ENCODE measurements at regions of chr12 and their contacts with region 1.

Region 1: DNA sequence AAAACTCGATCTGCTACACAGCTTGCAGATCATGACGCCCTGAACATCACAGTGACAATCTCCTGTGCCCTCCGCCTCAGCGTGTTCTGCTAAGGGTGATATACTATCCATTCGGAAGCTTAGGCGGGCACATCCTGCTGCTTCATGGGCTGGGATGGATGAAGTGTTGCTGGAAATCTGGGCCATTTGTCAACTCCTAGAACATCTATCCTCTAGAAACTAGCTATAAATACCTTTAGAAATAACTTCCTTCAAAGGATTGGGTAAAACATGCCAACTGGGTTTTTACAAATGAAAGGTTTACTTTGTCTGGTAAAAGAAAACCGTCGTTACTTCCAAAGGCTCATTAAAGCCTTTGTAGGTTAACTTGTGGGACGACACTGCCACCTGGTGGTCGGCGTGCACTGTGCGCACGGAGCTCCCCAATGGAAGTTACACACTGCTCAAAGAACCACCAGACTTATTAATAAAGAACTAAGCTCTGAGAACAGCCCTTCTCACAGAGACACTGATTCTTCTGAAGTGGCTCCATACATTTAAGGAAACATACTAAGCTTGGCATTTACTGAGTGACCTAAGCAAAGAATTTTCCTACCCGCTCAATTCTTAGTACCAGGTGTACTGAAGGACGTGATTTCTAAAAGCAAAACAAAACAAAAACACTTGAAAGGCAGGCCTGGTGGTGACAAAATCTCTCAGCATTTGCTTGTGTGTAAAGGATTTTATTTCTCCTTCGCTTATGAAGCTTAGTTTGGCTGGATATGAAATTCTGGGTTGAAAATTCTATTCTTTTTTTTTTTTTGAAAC is 21.6 kb upstream of the CACNA2D4 start:
- DNase-seq: peak; percentile 82 to 98
- H3K4me3 ChIP-seq: no peak overlapping the region
- CTCF ChIP-seq: peak in 1 of 3 donors; percentile 95
- POLR2A ChIP-seq: no peak

Region 2: GRCh38 chr12:1634590-1635191 is 305.3 kb before region 1 on chr12:
- intact Hi-C with region 1: loop called (anchors 5 kb)
- DNase-seq: peak; percentile 57 to 92
- H3K4me3 ChIP-seq: no peak overlapping the region
- CTCF ChIP-seq: no peak
- POLR2A ChIP-seq: no peak

Region 3: DNA sequence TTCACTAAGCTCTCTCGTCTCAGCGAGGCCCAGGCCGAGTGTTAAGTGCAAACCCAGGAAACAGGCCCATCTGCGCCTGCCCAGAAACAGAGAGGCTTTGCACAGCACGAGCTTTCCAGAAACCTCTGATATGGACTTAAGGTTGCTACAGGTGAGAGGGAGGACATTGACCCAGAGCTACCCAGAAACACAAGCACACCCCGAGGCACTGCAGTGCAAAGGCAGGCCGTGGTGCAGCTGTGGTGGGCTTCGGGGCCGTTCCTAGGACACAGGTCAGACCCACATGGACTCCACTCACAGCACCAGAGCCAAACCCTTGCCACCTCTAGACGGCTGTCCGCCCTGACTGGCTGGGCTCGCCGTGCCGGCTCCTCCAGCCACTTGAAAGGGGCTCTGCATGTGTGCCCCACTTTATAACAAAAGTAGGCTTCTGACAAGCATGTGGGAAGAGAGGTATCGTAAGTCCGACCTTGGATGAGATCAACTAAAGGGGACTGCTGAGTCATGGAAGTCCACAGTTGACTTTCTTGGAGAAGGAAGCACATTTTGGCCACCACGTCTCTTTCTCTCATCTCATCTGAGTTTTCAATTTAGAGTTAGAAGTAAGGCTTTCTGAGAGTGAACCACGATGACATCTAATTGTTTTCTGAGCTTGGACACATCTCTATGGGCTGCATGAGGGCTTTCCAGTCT is 59.7 kb before region 1 on chr12:
- intact Hi-C with region 1: no loop called
- DNase-seq: peak in 1 of 2 donors; percentile 67
- H3K4me3 ChIP-seq: no peak overlapping the region
- CTCF ChIP-seq: no peak
- POLR2A ChIP-seq: no peak

Region 4: GRCh38 chr12:1907652-1908611 is 32.1 kb before region 1 on chr12:
- intact Hi-C with region 1: no loop called
- DNase-seq: peak in 1 of 2 donors; percentile 69
- H3K4me3 ChIP-seq: no peak overlapping the region
- CTCF ChIP-seq: no peak
- POLR2A ChIP-seq: no peak

Region 5: DNA sequence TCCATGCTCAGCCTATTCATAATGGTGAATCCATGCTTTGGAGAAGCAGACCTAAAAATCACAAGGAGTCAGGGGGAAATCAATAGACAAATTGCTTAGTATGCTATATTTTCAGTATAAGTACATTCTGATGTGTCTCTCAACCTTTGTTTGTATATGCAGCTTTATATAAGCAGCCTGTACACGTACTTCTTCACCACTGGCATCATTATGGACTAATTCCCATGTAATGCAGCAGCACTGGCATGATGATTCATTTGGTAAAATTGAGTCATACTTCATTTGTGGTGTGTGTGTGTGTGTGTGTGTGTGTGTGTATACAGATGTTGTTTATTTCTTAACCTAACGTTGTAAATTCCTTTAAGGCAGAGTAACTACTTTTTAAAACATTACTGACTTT is 53.3 kb after region 1 on chr12:
- intact Hi-C with region 1: no loop called
- DNase-seq: no peak
- H3K4me3 ChIP-seq: no peak overlapping the region
- CTCF ChIP-seq: no peak
- POLR2A ChIP-seq: no peak

Measured in lower leg skin (tissue), 4 donors.